A673 (cell line): ENCODE measurements at regions of chr7 and their contacts with region 1.

Region 1: GRCh38 chr7:105589356-105590077 is 8.2 kb upstream of the EFCAB10 start:
- DNase-seq: peak; percentile 91
- H3K4me3 ChIP-seq: no peak overlapping the region
- H3K27ac ChIP-seq: no peak overlapping the region
- H3K4me1 ChIP-seq: no peaks in the 10 kb centered on the region
- H3K27me3 ChIP-seq: no peaks in the 10 kb centered on the region
- CTCF ChIP-seq: peak; percentile 83

Region 2: GRCh38 chr7:104883718-104884452 is 705.6 kb before region 1 on chr7:
- CTCF ChIA-PET with region 1: interaction called, 5 read pairs
- POLR2A ChIA-PET with region 1: no interaction called
- intact Hi-C with region 1: loop called (anchors 5 kb)
- DNase-seq: peak; percentile 95
- H3K4me3 ChIP-seq: no peak overlapping the region
- H3K27ac ChIP-seq: no peak overlapping the region
- H3K4me1 ChIP-seq: peaks cover 22% of the 10 kb centered on the region
- H3K27me3 ChIP-seq: no peaks in the 10 kb centered on the region
- CTCF ChIP-seq: peak; percentile 98

Region 3: GRCh38 chr7:106588422-106589198 is 999.1 kb after region 1 on chr7:
- CTCF ChIA-PET with region 1: no interaction called
- POLR2A ChIA-PET with region 1: no interaction called
- intact Hi-C with region 1: no loop called
- DNase-seq: no peak
- H3K4me3 ChIP-seq: no peak overlapping the region
- H3K27ac ChIP-seq: no peak overlapping the region
- H3K4me1 ChIP-seq: no peaks in the 10 kb centered on the region
- H3K27me3 ChIP-seq: no peaks in the 10 kb centered on the region
- CTCF ChIP-seq: no peak